ENCODE measurements at regions of chr3 and their contacts with region 1.

Region 1: DNA sequence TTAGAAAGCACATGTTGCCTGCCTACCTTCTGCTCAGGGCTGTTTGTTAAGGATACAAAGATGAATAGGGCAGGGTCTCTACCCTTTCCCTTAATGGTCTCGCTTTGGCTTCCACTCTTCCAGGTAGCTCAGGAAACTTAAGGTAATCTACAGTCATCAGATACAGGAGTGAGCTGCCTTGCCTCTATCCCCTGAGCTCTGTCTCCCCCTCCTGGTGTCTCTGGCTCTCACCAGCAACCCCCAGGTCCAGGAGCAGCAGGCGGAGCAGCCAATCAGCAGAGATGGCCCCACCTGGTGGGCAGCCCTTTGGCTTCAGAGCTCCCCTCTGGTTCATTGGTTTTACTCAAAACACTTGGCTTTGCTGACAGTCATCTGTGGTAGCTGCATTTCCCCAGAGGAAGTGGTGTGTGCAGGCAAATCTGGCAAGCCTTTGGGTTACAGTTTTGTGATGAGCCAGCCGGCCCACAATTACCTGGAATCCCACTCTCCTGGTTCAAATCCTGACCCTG is 8.5 kb upstream of the CX3CR1 start:
- DNase-seq: peak; percentile 79
- ATAC-seq: peak; percentile 95

Region 2: DNA sequence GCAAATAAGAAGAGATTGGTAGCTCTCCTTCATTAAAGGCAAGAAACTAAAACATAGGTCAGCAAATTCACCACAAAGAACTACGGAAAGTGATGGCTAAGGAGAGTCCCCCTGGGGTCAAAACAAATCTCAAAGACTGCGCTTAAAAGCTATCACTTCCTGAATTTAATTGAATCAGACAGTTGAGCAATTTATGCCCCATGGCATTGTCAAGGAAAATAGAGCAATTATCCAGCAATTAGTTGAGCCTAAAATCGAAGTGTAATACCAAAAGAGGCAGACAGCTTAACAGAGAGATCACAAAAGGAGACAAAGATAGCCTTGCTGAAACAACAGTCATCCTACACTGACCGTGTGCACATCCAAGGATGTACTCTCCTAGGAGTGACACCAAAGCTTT is 397.9 kb before region 1 on chr3:
- intact Hi-C with region 1: no loop called
- DNase-seq: no peak
- ATAC-seq: no peak

Region 3: GRCh38 chr3:39126532-39127071 is 161.8 kb before region 1 on chr3:
- intact Hi-C with region 1: loop called (anchors 2 kb)
- DNase-seq: no peak
- ATAC-seq: peak; percentile 85

Region 4: DNA sequence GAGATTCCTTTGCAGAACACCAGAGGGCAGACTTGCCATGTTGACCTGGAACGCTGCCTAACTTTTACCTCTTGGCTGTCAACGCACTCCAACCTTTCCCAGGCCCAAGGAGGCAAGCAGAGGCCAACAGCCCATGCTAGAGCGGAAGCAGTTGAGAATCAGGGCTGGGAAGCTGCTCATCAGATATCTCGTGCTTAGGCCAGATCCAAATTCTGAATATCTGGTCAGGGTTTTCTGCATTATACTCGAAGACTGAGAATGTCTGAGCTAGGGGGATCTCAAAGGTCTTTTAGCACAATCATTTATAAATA is 98.4 kb before region 1 on chr3:
- intact Hi-C with region 1: loop called (anchors 5 kb)
- DNase-seq: no peak
- ATAC-seq: peak; percentile 54

Measured in Right ventricle myocardium superior (tissue), 1 donor.